Ovary (tissue), 10 donors: ENCODE measurements at regions of chr7 and their contacts with region 1.

Region 1: GRCh38 chr7:132102942-132103341 is 473.3 kb downstream of the PLXNA4 start:
- DNase-seq: no peak
- H3K4me3 ChIP-seq: no peak overlapping the region
- H3K27ac ChIP-seq: no peak overlapping the region
- H3K4me1 ChIP-seq: no peaks in the 10 kb centered on the region
- H3K27me3 ChIP-seq: no peaks in the 10 kb centered on the region
- CTCF ChIP-seq: no peak
- EP300 ChIP-seq: no peak
- POLR2A ChIP-seq: no peak

Region 2: DNA sequence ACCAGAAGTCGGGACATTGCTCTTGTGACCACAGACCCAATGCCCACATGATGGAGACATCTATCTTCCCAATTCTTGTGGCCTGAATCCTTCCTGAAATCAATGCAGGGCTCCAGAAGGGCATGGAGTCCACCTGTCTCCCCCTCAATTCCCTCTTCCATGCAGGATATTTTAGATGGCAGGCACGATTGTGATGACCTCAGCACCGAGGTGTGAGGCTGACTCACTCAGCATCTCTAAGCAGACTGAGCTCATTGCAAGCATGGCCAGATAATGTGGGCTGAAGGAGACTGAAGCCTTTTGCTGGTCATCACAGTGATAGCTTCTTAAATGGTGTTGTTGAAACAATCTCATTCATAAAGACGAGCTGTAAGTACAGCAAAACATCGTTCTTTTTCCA is 171.6 kb before region 1 on chr7:
- intact Hi-C with region 1: no loop called
- DNase-seq: no peak
- H3K4me3 ChIP-seq: no peak overlapping the region
- H3K27ac ChIP-seq: no peak overlapping the region
- H3K4me1 ChIP-seq: no peaks in the 10 kb centered on the region
- H3K27me3 ChIP-seq: no peaks in the 10 kb centered on the region
- CTCF ChIP-seq: no peak
- EP300 ChIP-seq: no peak
- POLR2A ChIP-seq: no peak

Region 3: DNA sequence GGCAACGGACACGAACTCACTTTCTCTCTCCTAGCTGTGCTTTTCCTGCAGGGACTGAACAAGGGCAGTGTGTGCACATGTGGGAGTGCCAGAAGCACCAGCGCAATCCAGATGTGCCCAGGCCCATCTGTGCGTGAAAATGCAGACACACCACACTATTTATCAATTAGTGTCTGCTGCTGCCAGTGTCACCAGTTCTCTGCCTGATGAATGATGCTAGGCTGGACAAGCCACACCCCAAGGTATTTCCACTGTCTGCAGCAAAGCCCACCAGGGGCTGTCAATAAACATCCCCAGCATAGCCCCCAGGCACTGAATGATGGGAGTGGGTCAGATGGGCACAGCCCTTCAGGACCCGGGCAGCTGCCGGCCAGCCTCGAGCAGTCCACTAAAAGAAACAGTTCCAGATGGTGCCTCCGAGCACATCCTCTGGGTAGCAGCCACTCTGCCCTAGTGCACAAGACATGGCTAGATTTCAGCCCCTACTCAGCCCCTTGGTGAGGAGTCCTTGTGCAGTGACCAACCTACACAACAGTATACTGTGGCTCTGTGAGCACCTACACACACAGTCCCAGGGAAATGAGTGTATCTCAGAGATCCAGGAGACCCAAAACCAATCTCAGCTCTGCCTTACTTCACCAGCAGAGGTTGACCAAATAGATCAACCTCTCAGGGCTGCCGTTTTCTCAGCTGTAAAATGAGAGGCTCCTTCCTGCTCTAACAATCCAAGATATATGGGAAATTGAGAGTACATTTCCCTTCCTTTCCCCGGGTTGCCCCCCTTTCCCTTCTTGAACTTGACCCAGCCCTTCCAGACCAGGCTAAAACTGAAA is 158.6 kb after region 1 on chr7:
- intact Hi-C with region 1: loop called in 1 of 4 experiments (anchors 10 kb)
- DNase-seq: no peak
- H3K4me3 ChIP-seq: no peak overlapping the region
- H3K27ac ChIP-seq: no peak overlapping the region
- H3K4me1 ChIP-seq: no peaks in the 10 kb centered on the region
- H3K27me3 ChIP-seq: no peaks in the 10 kb centered on the region
- CTCF ChIP-seq: no peak
- EP300 ChIP-seq: no peak
- POLR2A ChIP-seq: no peak

Region 4: DNA sequence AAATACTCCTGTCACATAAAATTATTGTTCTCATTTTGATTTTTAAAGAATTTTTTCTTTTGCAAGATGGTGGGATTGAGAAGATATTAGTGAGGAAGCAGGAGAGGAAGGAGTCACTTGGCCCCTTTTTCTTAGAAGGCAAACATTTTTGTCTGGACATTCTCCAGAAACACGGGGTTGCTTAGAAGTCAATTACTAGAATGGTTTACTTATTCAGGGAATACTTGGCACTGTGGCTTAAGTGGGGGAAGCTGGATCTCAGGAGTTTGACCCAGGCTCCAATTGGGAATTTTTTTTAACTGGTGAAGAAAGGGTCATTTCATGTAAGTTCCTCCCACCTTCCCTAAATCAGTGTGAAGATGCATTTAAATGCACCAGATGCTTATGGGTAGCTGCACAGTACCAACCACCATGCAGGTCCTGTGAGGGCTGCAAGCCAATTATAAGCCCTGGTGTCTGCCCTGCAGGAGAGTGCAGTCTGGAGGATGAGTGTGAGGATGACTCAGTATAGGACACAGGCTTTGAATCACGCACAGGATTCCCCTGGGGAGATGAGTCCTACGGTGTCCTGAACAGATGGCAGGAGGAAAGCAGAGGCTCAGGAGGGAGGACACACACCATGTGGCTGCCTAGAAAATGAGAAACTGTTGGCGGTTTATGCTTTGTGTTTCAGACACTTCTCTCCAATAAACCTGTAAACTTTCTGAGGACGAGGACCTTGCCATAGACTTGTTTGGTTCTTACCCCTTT is 174.2 kb after region 1 on chr7:
- intact Hi-C with region 1: no loop called
- DNase-seq: no peak
- H3K4me3 ChIP-seq: no peak overlapping the region
- H3K27ac ChIP-seq: no peak overlapping the region
- H3K4me1 ChIP-seq: peaks cover 6% of the 10 kb centered on the region
- H3K27me3 ChIP-seq: no peaks in the 10 kb centered on the region
- CTCF ChIP-seq: no peak
- EP300 ChIP-seq: no peak
- POLR2A ChIP-seq: no peak